Sigmoid colon (tissue), 7 donors: ENCODE measurements at regions of chr14 and their contacts with region 1.

Region 1: GRCh38 chr14:70816525-70816924 is 7.2 kb upstream of the MAP3K9 start:
- DNase-seq: no peak
- H3K4me3 ChIP-seq: no peak overlapping the region
- H3K27ac ChIP-seq: no peak overlapping the region
- H3K4me1 ChIP-seq: peaks cover 0 to 9% (median 4%) of the 10 kb centered on the region in 4 donors
- H3K27me3 ChIP-seq: peaks cover 0 to 12% (median 2%) of the 10 kb centered on the region in 3 donors
- CTCF ChIP-seq: no peak
- EP300 ChIP-seq: no peak
- POLR2A ChIP-seq: no peak

Region 2: GRCh38 chr14:69818757-69819191 is 997.8 kb before region 1 on chr14:
- intact Hi-C with region 1: loop called (anchors 5 kb)
- DNase-seq: no peak
- H3K4me3 ChIP-seq: no peak overlapping the region
- H3K27ac ChIP-seq: no peak overlapping the region
- H3K4me1 ChIP-seq: peaks cover 0 to 4% (median 1%) of the 10 kb centered on the region in 4 donors
- H3K27me3 ChIP-seq: peaks cover 0 to 22% (median 0%) of the 10 kb centered on the region in 3 donors
- CTCF ChIP-seq: peak; percentile 75 to 89 (median 86)
- EP300 ChIP-seq: no peak
- POLR2A ChIP-seq: no peak

Region 3: GRCh38 chr14:70600382-70601157 is 216.0 kb before region 1 on chr14 and contains the start of gene MED6:
- intact Hi-C with region 1: loop called (anchors 2 kb)
- DNase-seq: peak; percentile 97
- H3K4me3 ChIP-seq: peak within 1 kb of the TSS; percentile 63 to 88 (median 83)
- H3K27ac ChIP-seq: peak within 1 kb of the TSS; percentile 70 to 79 (median 78)
- H3K4me1 ChIP-seq: peaks cover 0 to 18% (median 13%) of the 10 kb centered on the region in 4 donors
- H3K27me3 ChIP-seq: no peaks in the 10 kb centered on the region
- CTCF ChIP-seq: no peak
- EP300 ChIP-seq: no peak
- POLR2A ChIP-seq: no peak
- total RNA-seq, gene MED6: 24.3 to 40.7 (median 30.1) TPM

Region 4: DNA sequence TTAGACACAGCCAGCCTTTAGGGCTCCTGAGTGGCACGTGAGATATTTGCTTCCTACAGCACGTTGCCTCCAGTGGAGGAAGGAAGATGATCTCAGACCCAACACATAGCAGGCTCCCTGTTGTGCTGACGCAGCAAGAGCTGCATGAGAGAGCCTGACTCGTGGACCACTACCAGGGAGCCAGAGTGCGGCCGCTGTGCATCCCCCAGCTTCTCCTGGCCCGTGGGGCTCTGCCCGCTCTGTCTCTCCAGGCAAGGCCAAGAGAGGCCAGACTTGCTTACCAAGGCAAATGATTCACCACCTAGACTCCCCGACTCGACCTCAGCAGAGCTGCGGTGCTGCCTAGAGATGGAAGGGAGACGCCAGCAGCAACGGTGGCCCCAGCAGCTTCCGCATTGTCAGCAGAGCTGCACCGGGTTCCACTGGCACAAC is 44.7 kb before region 1 on chr14:
- intact Hi-C with region 1: no loop called
- DNase-seq: no peak
- H3K4me3 ChIP-seq: no peak overlapping the region
- H3K27ac ChIP-seq: no peak overlapping the region
- H3K4me1 ChIP-seq: no peaks in the 10 kb centered on the region
- H3K27me3 ChIP-seq: no peaks in the 10 kb centered on the region
- CTCF ChIP-seq: no peak
- EP300 ChIP-seq: no peak
- POLR2A ChIP-seq: no peak

Region 5: GRCh38 chr14:70907176-70907995 is 90.9 kb after region 1 on chr14 and contains the start of gene PCNX1:
- intact Hi-C with region 1: loop called (anchors 5 kb)
- DNase-seq: peak; percentile 94
- H3K4me3 ChIP-seq: peak within 1 kb of the TSS; percentile 80 to 98 (median 88)
- H3K27ac ChIP-seq: peak within 1 kb of the TSS; percentile 87 to 98 (median 94)
- H3K4me1 ChIP-seq: peaks cover 0 to 61% (median 58%) of the 10 kb centered on the region in 4 donors
- H3K27me3 ChIP-seq: no peaks in the 10 kb centered on the region
- CTCF ChIP-seq: peak; percentile 45 to 88 (median 78)
- EP300 ChIP-seq: no peak
- POLR2A ChIP-seq: peak in 1 of 2 donors; percentile 9
- total RNA-seq, gene PCNX1: 62.8 to 73.9 (median 70.1) TPM

Region 6: GRCh38 chr14:70955543-70956480 is 139.3 kb after region 1 on chr14:
- intact Hi-C with region 1: loop called (anchors 5 kb)
- DNase-seq: no peak
- H3K4me3 ChIP-seq: no peak overlapping the region
- H3K27ac ChIP-seq: no peak overlapping the region
- H3K4me1 ChIP-seq: peaks cover 0 to 17% (median 14%) of the 10 kb centered on the region in 4 donors
- H3K27me3 ChIP-seq: no peaks in the 10 kb centered on the region
- CTCF ChIP-seq: peak in 2 of 4 experiments; percentile 17 to 39
- EP300 ChIP-seq: no peak
- POLR2A ChIP-seq: no peak

Region 7: GRCh38 chr14:70972107-70972976 is 155.8 kb after region 1 on chr14:
- intact Hi-C with region 1: loop called (anchors 2 kb)
- DNase-seq: peak; percentile 91
- H3K4me3 ChIP-seq: no peak overlapping the region
- H3K27ac ChIP-seq: no peak overlapping the region
- H3K4me1 ChIP-seq: peaks cover 0 to 7% (median 0%) of the 10 kb centered on the region in 4 donors
- H3K27me3 ChIP-seq: no peaks in the 10 kb centered on the region
- CTCF ChIP-seq: peak; percentile 79 to 90 (median 82)
- EP300 ChIP-seq: no peak
- POLR2A ChIP-seq: no peak

Region 8: DNA sequence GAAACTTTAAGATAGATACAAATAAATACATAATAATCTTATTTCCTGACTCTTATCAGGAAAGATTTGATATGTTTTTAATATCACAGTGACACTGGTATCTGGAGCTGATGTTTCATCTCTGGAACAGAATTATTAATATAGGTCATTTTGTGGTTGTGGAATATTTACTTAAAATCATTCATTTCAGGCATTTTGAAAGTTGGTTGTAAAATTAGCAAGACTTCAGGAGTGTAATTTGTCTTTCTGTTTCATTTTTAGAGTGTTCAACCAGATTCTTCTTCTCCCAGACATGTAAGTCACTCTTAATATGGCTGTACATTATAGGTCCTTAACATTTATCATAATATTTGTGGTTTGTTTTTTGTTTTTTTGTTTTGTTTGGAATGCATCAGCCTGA is 206.4 kb after region 1 on chr14:
- intact Hi-C with region 1: no loop called
- DNase-seq: no peak
- H3K4me3 ChIP-seq: no peak overlapping the region
- H3K27ac ChIP-seq: no peak overlapping the region
- H3K4me1 ChIP-seq: peaks cover 0 to 11% (median 0%) of the 10 kb centered on the region in 4 donors
- H3K27me3 ChIP-seq: no peaks in the 10 kb centered on the region
- CTCF ChIP-seq: no peak
- EP300 ChIP-seq: no peak
- POLR2A ChIP-seq: no peak

Region 9: GRCh38 chr14:71166180-71166790 is 349.8 kb after region 1 on chr14:
- intact Hi-C with region 1: no loop called
- DNase-seq: no peak
- H3K4me3 ChIP-seq: no peak overlapping the region
- H3K27ac ChIP-seq: no peak overlapping the region
- H3K4me1 ChIP-seq: no peaks in the 10 kb centered on the region
- H3K27me3 ChIP-seq: no peaks in the 10 kb centered on the region
- CTCF ChIP-seq: peak in 1 of 4 experiments; percentile 32
- EP300 ChIP-seq: no peak
- POLR2A ChIP-seq: no peak